Gastrocnemius medialis (tissue), 4 donors: ENCODE measurements at regions of chr6 and their contacts with region 1.

Region 1: GRCh38 chr6:90296346-90297114 is at the start of gene BACH2:
- DNase-seq: peak; percentile 83 to 85
- ATAC-seq: peak; percentile 60 to 67
- H3K4me3 ChIP-seq: peak within 1 kb of the TSS; percentile 70 to 98 (median 88)
- H3K27ac ChIP-seq: peak within 1 kb of the TSS; percentile 84 to 99 (median 94)
- H3K4me1 ChIP-seq: peaks cover 22 to 29% of the 10 kb centered on the region in 2 donors
- H3K27me3 ChIP-seq: no peaks in the 10 kb centered on the region
- CTCF ChIP-seq: peak in 1 of 5 experiments; percentile 45
- POLR2A ChIP-seq: peak; percentile 38 to 65
- total RNA-seq, gene BACH2: 3.6 to 13.4 (median 7.5) TPM

Region 2: GRCh38 chr6:89940225-89941027 is 356.1 kb before region 1 on chr6:
- in situ Hi-C with region 1: loop called in 1 of 4 experiments (anchors 5 kb)
- intact Hi-C with region 1: loop called (anchors 2 kb)
- DNase-seq: peak; percentile 70 to 80
- ATAC-seq: peak; percentile 94 to 95
- H3K4me3 ChIP-seq: no peak overlapping the region
- H3K27ac ChIP-seq: peak overlapping the region; percentile 18 to 60 (median 47)
- H3K4me1 ChIP-seq: peaks cover 25 to 27% of the 10 kb centered on the region in 2 donors
- H3K27me3 ChIP-seq: no peaks in the 10 kb centered on the region
- CTCF ChIP-seq: peak; percentile 63 to 74 (median 73)
- POLR2A ChIP-seq: no peak

Region 3: GRCh38 chr6:90103056-90103800 is 193.3 kb before region 1 on chr6:
- in situ Hi-C with region 1: loop called in 2 of 4 experiments (anchors 5 to 25 kb)
- intact Hi-C with region 1: loop called (anchors 2 kb)
- DNase-seq: no peak
- ATAC-seq: no peak
- H3K4me3 ChIP-seq: no peak overlapping the region
- H3K27ac ChIP-seq: no peak overlapping the region
- H3K4me1 ChIP-seq: peaks cover 14 to 22% of the 10 kb centered on the region in 2 donors
- H3K27me3 ChIP-seq: no peaks in the 10 kb centered on the region
- CTCF ChIP-seq: no peak
- POLR2A ChIP-seq: no peak

Region 4: DNA sequence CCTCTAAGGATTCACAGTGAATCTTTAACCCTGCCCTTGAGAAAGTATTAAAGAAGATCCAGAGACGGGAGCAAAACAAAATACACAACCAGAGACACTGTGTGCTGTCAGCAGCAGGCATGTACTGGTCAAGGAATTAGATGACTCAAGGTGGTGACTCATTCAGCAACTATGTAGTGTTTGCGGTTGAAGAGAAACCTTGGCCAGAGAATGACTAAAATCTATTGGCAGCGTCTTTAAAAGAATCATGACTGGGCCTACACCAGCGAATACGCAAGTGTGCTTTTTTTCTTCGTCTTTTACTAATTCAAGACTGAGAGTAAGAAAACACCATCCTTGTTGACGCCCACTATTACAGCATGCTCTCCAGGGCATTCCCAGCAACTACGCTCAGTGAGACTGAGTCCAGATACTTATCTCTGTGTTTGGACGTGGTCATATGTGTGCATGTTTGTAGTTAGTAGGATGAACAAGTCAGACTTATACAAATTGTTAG is 72.5 kb after region 1 on chr6:
- in situ Hi-C with region 1: no loop called
- intact Hi-C with region 1: loop called (anchors 1 kb)
- DNase-seq: peak; percentile 69
- ATAC-seq: peak; percentile 99 to 100
- H3K4me3 ChIP-seq: no peak overlapping the region
- H3K27ac ChIP-seq: peak overlapping the region; percentile 55 to 81 (median 62)
- H3K4me1 ChIP-seq: peaks cover 8 to 13% of the 10 kb centered on the region in 2 donors
- H3K27me3 ChIP-seq: no peaks in the 10 kb centered on the region
- CTCF ChIP-seq: no peak
- POLR2A ChIP-seq: no peak

Region 5: DNA sequence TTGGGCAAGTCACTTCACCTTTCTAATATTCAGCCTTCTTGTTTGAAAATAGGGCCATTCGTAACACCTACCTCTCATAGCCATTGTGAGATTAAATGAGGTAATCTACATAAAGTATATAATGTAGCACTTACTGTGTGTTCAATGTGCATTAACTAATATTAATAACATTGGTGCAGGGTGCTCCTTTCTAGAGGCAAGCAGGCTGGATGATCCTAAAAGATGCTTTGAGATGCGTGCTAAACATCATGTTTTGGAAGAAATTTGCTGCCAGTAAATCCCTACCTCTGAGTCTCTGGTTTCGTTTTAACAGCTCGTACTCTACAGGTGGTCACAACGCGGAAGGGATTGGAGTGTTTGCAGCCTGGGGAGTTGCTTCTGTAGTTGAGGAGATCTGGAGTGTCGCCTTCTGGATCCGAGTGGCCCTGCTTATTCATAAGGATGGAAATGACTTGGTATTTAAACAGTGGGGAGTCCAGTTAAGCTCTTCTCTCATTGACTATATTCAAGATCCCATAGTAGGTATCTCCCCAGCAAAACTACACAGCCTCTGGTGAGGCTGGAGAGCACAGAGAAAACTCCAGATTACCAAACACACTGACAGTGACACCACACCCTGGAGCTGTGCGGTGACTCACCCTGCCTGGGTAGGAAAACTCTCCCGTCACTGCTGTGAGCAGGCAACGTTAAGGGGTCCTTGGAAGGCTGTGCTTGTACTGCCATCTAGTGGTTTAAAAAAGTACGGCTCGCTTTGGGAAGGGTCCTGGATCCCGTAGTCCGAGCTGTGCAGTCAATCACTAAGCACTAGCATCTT is 182.5 kb after region 1 on chr6:
- in situ Hi-C with region 1: loop called in 1 of 4 experiments (anchors 10 kb)
- intact Hi-C with region 1: loop called (anchors 2 kb)
- DNase-seq: peak; percentile 92 to 95
- ATAC-seq: peak; percentile 99 to 100
- H3K4me3 ChIP-seq: no peak overlapping the region
- H3K27ac ChIP-seq: peak overlapping the region; percentile 31 to 68 (median 58)
- H3K4me1 ChIP-seq: peaks cover 0 to 5% of the 10 kb centered on the region in 2 donors
- H3K27me3 ChIP-seq: no peaks in the 10 kb centered on the region
- CTCF ChIP-seq: peak; percentile 86 to 94 (median 93)
- POLR2A ChIP-seq: no peak

Region 6: GRCh38 chr6:90835596-90836212 is 539.2 kb after region 1 on chr6:
- in situ Hi-C with region 1: no loop called
- intact Hi-C with region 1: no loop called
- DNase-seq: no peak
- ATAC-seq: no peak
- H3K4me3 ChIP-seq: no peak overlapping the region
- H3K27ac ChIP-seq: no peak overlapping the region
- H3K4me1 ChIP-seq: no peaks in the 10 kb centered on the region
- H3K27me3 ChIP-seq: no peaks in the 10 kb centered on the region
- CTCF ChIP-seq: no peak
- POLR2A ChIP-seq: no peak